ENCODE measurements at regions of chr21 and their contacts with region 1.

Region 1: DNA sequence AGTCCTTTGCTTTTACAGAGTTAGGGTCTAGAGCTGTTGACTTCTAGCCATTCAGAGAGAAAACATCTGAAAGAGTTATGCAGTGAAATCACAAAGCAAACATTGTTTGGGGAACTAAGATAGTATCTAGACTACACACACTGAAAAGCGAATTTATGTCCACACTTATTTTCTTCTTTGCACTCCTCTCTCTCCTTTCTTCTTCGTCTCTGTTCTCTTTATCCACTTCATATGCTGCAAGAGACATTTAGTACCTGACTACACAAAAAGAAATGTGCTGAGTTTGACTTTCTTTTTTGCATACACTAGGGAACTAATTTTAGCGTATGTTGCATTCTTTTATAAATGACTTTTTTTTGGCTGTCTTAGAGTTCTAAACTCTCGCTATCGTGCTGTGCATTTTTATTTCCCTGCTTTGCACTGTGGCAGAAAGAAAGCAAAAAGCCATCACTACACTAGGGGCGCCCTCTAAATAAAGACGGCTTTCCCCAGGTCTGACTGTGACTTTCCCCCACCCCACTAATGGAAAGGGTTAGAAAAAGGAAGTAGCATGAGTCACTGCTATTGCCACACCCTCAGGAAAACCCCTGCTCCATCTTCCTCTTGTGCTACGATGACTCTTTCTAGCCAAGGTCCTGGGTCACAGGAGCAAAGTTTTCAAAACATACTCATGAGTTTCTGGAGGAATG is 65.7 kb downstream of the MAP3K7CL start:
- DNase-seq: peak; percentile 33
- ATAC-seq: peak; percentile 97
- H3K4me3 Mint-ChIP-seq: peak overlapping the region; percentile 80
- H3K27ac Mint-ChIP-seq: peak overlapping the region; percentile 97
- H3K4me1 Mint-ChIP-seq: peaks cover 40% of the 10 kb centered on the region
- H3K27me3 Mint-ChIP-seq: no peaks in the 10 kb centered on the region
- CTCF ChIP-seq: peak; percentile 23

Region 2: DNA sequence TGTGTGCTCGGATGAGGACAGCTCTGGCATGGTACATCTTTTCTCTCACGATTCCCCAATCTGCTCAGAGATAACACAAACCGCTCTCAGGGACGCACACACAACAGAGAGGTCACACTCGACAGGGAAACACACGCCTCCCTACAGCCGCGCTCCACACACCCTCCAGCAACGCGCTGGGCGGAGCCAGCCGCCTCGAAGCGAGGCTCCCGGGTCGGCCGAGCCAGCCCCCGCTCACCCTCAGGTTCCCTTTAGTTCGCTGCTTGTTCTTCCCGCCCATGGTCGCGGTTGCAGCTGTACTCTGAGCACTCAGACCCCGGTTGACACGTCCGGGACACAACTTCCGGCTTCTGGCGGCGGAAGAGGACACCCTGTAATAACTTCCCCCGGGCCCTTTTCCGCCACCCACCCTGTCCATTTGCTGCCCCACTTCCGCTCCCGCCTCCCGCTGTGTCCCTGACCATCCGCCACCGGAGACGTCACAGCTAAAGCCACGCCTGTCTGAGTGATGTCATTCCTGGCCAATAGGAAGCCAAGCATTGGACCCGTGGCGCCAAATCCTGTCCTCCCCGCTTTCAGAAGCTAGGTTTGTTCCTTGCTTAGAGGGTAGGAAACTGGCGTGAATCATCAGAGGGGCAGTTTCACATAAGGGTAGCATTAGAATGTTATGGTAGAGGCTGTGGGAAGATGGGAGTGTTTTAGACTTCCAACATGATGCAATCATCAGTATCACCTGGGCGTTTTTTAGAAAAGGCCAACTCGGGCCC is 203.4 kb before region 1 on chr21 and contains the start of gene LTN1:
- CTCF ChIA-PET with region 1: no interaction called
- POLR2A ChIA-PET with region 1: no interaction called
- intact Hi-C with region 1: loop called (anchors 5 kb)
- DNase-seq: peak; percentile 95
- ATAC-seq: peak; percentile 95
- H3K4me3 Mint-ChIP-seq: peak within 1 kb of the TSS; percentile 96
- H3K27ac Mint-ChIP-seq: peak within 1 kb of the TSS; percentile 94
- H3K4me1 Mint-ChIP-seq: peaks cover 39% of the 10 kb centered on the region
- H3K27me3 Mint-ChIP-seq: no peaks in the 10 kb centered on the region
- CTCF ChIP-seq: no peak
- total RNA-seq, gene LTN1: 22.5 and 25.8 TPM in 2 replicates

Region 3: DNA sequence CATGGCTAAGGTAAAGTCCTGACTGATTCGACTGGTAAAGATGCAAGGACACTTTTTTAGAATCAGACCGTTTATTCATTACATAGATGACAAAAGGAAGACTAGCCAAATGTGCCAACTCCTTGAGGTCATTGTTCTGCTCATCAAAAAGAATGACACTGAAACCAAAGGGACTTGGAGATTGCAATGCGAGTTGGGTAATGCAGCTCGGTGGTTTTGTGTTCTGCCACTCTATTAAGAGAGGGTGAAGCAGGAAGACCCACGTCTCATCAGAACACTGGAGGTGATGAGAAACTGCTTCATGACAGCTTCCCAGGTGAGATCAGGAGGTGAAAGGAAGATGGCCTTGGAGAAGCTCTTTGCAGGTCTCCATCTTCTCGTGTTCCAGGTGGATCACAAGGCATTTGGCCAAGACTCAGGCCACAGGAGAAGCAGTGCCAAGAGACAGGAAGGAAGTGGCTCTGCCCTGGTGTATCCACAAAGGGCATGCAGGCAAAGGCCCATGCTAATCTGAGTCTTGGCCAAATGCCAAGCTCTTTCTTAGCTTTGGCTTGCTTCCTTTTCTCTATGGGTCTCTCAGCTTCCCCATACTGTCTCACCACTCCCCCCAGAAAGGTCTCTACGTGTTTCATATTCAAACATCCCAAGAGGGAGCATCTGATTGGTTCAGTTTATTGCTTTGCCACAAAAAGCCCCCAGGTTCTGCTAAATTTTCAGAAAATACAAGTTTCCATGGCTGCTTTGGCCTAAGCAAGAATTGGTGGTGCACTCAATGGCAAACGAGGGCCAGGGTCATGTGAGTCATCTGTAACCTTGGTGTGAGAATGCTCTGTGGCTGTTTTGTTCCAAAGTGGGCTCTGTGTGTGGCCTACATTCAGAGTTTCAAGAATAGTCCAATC is 117.0 kb before region 1 on chr21:
- CTCF ChIA-PET with region 1: no interaction called
- POLR2A ChIA-PET with region 1: no interaction called
- intact Hi-C with region 1: loop called (anchors 1 kb)
- DNase-seq: peak; percentile 18
- ATAC-seq: peak; percentile 51
- H3K4me3 Mint-ChIP-seq: peak overlapping the region; percentile 28
- H3K27ac Mint-ChIP-seq: peak overlapping the region; percentile 82
- H3K4me1 Mint-ChIP-seq: peaks cover 49% of the 10 kb centered on the region
- H3K27me3 Mint-ChIP-seq: no peaks in the 10 kb centered on the region
- CTCF ChIP-seq: no peak

Region 4: GRCh38 chr21:29125191-29125590 is 70.9 kb before region 1 on chr21:
- CTCF ChIA-PET with region 1: interaction called, 3 read pairs
- POLR2A ChIA-PET with region 1: interaction called, 18 read pairs
- intact Hi-C with region 1: loop called (anchors 2 kb)
- DNase-seq: no peak
- ATAC-seq: peak; percentile 83
- H3K4me3 Mint-ChIP-seq: no peak overlapping the region
- H3K27ac Mint-ChIP-seq: peak overlapping the region; percentile 69
- H3K4me1 Mint-ChIP-seq: peaks cover 42% of the 10 kb centered on the region
- H3K27me3 Mint-ChIP-seq: no peaks in the 10 kb centered on the region
- CTCF ChIP-seq: no peak

Region 5: DNA sequence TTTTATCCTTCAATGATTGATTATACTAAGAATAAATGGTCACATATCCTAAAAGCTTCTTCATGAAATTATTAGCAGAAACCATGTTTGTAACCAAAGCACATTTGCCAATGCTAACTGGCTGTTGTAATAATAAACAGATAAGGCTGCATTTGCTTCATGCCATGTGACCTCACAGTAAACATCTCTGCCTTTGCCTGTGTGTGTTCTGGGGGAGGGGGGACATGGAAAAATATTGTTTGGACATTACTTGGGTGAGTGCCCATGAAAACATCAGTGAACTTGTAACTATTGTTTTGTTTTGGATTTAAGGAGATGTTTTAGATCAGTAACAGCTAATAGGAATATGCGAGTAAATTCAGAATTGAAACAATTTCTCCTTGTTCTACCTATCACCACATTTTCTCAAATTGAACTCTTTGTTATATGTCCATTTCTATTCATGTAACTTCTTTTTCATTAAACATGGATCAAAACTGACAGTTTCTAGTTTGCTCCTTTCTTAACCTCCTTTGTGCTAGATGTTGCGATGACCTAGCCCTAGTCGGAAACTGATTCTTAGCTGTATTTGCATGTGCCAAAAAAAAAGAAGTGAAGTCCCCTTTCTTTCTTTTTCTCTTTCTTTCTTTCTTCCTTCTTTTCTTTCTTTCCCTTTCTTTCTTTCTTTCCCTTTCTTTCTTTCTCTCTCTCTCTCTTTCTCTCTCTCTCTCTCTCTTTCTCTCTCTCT is 20.6 kb before region 1 on chr21:
- CTCF ChIA-PET with region 1: interaction called, 3 read pairs
- POLR2A ChIA-PET with region 1: interaction called, 10 read pairs
- intact Hi-C with region 1: loop called (anchors 2 kb)
- DNase-seq: no peak
- ATAC-seq: no peak
- H3K4me3 Mint-ChIP-seq: peak overlapping the region; percentile 52
- H3K27ac Mint-ChIP-seq: peak overlapping the region; percentile 24
- H3K4me1 Mint-ChIP-seq: peaks cover 27% of the 10 kb centered on the region
- H3K27me3 Mint-ChIP-seq: no peaks in the 10 kb centered on the region
- CTCF ChIP-seq: no peak

Region 6: GRCh38 chr21:29232601-29233546 is 36.7 kb after region 1 on chr21:
- CTCF ChIA-PET with region 1: interaction called, 3 read pairs
- POLR2A ChIA-PET with region 1: no interaction called
- intact Hi-C with region 1: loop called (anchors 1 kb)
- DNase-seq: no peak
- ATAC-seq: peak; percentile 42
- H3K4me3 Mint-ChIP-seq: peak overlapping the region; percentile 72
- H3K27ac Mint-ChIP-seq: peak overlapping the region; percentile 96
- H3K4me1 Mint-ChIP-seq: peaks cover 78% of the 10 kb centered on the region
- H3K27me3 Mint-ChIP-seq: no peaks in the 10 kb centered on the region
- CTCF ChIP-seq: no peak

Region 7: GRCh38 chr21:29343519-29343918 is 147.4 kb after region 1 on chr21:
- CTCF ChIA-PET with region 1: no interaction called
- POLR2A ChIA-PET with region 1: no interaction called
- intact Hi-C with region 1: loop called (anchors 1 kb)
- DNase-seq: no peak
- ATAC-seq: no peak
- H3K4me3 Mint-ChIP-seq: no peak overlapping the region
- H3K27ac Mint-ChIP-seq: no peak overlapping the region
- H3K4me1 Mint-ChIP-seq: peaks cover 36% of the 10 kb centered on the region
- H3K27me3 Mint-ChIP-seq: no peaks in the 10 kb centered on the region
- CTCF ChIP-seq: no peak